GM13977 (cell line): ENCODE measurements at regions of chr3 and their contacts with region 1.

Region 1: GRCh38 chr3:100254168-100254777 is 6.5 kb upstream of the TBC1D23 start:
- DNase-seq: peak; percentile 51
- CTCF ChIP-seq: peak; percentile 87

Region 2: DNA sequence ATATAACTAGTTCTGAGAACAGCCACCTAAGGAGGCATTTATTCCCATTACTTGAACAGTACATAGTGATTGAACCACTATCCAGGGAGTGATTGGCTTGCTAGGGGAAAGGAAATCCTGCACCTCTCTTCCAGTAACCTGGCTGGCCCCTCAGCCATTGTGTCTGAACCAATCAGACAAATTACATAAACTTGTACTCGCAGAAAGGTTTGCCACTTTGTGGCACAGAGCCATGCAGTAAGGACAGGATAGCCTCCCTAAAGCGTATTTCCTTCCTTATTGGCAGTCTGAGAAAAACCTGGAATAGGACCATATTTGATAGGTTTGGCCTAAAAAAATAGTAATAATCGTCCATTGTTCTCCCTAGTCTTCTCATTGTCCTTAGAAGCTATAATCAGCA is 417.6 kb before region 1 on chr3:
- in situ Hi-C with region 1: loop called (anchors 5 kb)
- DNase-seq: no peak
- CTCF ChIP-seq: no peak

Region 3: GRCh38 chr3:100073899-100074307 is 180.4 kb before region 1 on chr3:
- in situ Hi-C with region 1: loop called (anchors 10 kb)
- DNase-seq: no peak
- CTCF ChIP-seq: no peak

Region 4: GRCh38 chr3:100136921-100137320 is 117.4 kb before region 1 on chr3:
- in situ Hi-C with region 1: no loop called
- DNase-seq: no peak
- CTCF ChIP-seq: no peak